Esophagus muscularis mucosa (tissue), 4 donors: ENCODE measurements at regions of chr6 and their contacts with region 1.

Region 1: DNA sequence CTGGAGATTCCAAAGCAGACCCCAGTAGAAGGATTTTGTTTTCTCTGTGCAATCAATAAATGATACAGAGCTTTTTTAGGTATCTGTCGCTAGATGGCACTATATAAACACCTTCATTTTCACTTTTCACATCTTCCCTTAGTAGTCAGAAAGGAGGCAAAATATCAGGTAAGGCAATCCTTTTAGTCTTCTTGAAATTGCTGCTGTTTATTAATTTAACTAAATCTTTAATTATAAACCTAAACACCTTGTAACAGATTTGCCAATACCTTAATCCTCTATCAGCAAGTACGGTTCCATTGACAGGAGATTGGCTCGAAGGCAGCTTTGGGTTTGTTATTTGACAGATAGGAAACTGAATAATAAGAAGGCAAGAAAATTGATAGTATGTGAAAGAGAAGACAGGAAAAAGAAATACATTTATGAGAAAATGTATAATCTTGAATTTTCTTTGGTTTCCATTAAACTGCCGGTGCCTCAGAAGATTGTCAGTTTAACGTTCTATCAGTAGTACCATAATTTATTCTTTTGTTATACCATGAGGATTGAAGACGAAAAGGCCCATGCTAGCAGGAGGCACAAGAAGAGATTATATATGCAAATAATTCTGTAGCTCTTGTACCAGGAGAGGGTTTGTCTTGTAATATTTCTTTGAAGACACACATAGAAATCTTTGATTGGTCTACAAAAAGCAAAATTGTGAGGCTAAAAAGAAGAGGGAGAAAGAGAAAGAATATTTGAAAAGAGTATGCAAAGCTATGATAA is 23.5 kb upstream of the IBTK start:
- DNase-seq: no peak
- H3K4me3 ChIP-seq: no peak overlapping the region
- H3K27ac ChIP-seq: peak overlapping the region in 2 of 4 donors; percentile 17 to 61
- H3K4me1 ChIP-seq: peaks cover 0 to 29% (median 20%) of the 10 kb centered on the region in 4 donors
- H3K27me3 ChIP-seq: no peaks in the 10 kb centered on the region
- CTCF ChIP-seq: peak; percentile 62 to 73 (median 68)
- EP300 ChIP-seq: no peak
- POLR2A ChIP-seq: no peak

Region 2: DNA sequence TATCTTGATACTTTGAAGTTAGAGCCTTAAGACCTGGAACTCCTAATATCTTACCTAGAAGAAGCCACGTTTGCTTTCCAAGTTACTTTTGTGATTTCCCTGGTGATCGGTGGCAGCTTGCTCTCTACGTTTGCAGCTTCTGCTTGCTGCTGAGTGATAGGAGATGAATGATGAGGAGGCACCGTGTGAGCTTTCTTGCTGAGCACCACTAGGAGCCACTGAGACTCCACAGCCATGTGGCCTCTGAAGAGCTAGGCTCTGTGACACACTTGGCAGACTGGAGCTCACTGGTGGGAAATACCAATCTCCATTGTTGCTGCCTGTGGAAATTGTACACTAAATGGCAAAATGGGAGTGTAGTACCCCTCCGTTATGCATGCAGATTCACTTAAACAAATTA is 185.4 kb before region 1 on chr6:
- intact Hi-C with region 1: no loop called
- DNase-seq: no peak
- H3K4me3 ChIP-seq: no peak overlapping the region
- H3K27ac ChIP-seq: no peak overlapping the region
- H3K4me1 ChIP-seq: no peaks in the 10 kb centered on the region
- H3K27me3 ChIP-seq: no peaks in the 10 kb centered on the region
- CTCF ChIP-seq: no peak
- EP300 ChIP-seq: no peak
- POLR2A ChIP-seq: no peak

Region 3: GRCh38 chr6:82196161-82196560 is 74.9 kb before region 1 on chr6:
- intact Hi-C with region 1: no loop called
- DNase-seq: no peak
- H3K4me3 ChIP-seq: no peak overlapping the region
- H3K27ac ChIP-seq: no peak overlapping the region
- H3K4me1 ChIP-seq: no peaks in the 10 kb centered on the region
- H3K27me3 ChIP-seq: no peaks in the 10 kb centered on the region
- CTCF ChIP-seq: no peak
- EP300 ChIP-seq: no peak
- POLR2A ChIP-seq: no peak

Region 4: GRCh38 chr6:82607998-82608725 is 337.1 kb after region 1 on chr6:
- intact Hi-C with region 1: loop called (anchors 10 kb)
- DNase-seq: no peak
- H3K4me3 ChIP-seq: no peak overlapping the region
- H3K27ac ChIP-seq: peak overlapping the region; percentile 67 to 76 (median 69)
- H3K4me1 ChIP-seq: peaks cover 0 to 58% (median 43%) of the 10 kb centered on the region in 4 donors
- H3K27me3 ChIP-seq: no peaks in the 10 kb centered on the region
- CTCF ChIP-seq: no peak
- EP300 ChIP-seq: no peak
- POLR2A ChIP-seq: no peak

Region 5: GRCh38 chr6:82651845-82652335 is 380.8 kb after region 1 on chr6:
- intact Hi-C with region 1: no loop called
- DNase-seq: no peak
- H3K4me3 ChIP-seq: no peak overlapping the region
- H3K27ac ChIP-seq: no peak overlapping the region
- H3K4me1 ChIP-seq: peaks cover 0 to 5% (median under 1%) of the 10 kb centered on the region in 4 donors
- H3K27me3 ChIP-seq: no peaks in the 10 kb centered on the region
- CTCF ChIP-seq: no peak
- EP300 ChIP-seq: no peak
- POLR2A ChIP-seq: no peak